Testis (tissue), 5 donors: ENCODE measurements at regions of chr5 and their contacts with region 1.

Region 1: DNA sequence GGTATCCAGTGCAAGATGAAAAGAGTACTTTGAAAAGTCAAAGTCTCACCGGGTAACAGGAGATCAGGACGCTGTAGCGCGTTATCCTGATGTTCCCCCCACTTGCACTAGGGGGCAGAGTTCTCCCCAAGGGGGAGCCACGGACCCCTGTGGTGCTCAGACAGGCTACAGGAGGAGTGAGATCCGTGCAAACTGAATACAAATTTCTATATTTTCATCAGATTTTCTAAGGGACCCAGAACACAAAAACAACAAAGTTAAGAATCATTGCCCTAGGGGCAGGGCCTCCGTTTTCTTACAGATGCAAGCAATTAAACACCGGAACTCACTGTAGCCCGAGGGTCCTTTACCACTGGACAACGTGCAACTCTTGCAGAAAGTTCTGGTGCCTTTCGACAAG is 2.0 kb downstream of the MYO10 start:
- DNase-seq: peak; percentile 83
- H3K4me3 ChIP-seq: peak overlapping the region; percentile 81 to 99
- H3K27ac ChIP-seq: no peak overlapping the region
- H3K4me1 ChIP-seq: peaks cover 31% of the 10 kb centered on the region
- H3K27me3 ChIP-seq: no peaks in the 10 kb centered on the region
- CTCF ChIP-seq: peak; percentile 67 to 92 (median 70)
- POLR2A ChIP-seq: no peak

Region 2: GRCh38 chr5:16776611-16777251 is 157.4 kb before region 1 on chr5:
- intact Hi-C with region 1: no loop called
- DNase-seq: peak; percentile 84
- H3K4me3 ChIP-seq: no peak overlapping the region
- H3K27ac ChIP-seq: peak overlapping the region; percentile 39 to 53
- H3K4me1 ChIP-seq: peaks cover 16% of the 10 kb centered on the region
- H3K27me3 ChIP-seq: no peaks in the 10 kb centered on the region
- CTCF ChIP-seq: peak; percentile 52 to 69 (median 65)
- POLR2A ChIP-seq: no peak

Region 3: GRCh38 chr5:16809395-16810207 is 124.5 kb before region 1 on chr5:
- intact Hi-C with region 1: loop called (anchors 10 kb)
- DNase-seq: peak; percentile 79
- H3K4me3 ChIP-seq: no peak overlapping the region
- H3K27ac ChIP-seq: peak overlapping the region; percentile 10 to 66
- H3K4me1 ChIP-seq: peaks cover 37% of the 10 kb centered on the region
- H3K27me3 ChIP-seq: no peaks in the 10 kb centered on the region
- CTCF ChIP-seq: no peak
- POLR2A ChIP-seq: no peak